RWPE1 (cell line): ENCODE measurements at regions of chr3 and their contacts with region 1.

Region 1: DNA sequence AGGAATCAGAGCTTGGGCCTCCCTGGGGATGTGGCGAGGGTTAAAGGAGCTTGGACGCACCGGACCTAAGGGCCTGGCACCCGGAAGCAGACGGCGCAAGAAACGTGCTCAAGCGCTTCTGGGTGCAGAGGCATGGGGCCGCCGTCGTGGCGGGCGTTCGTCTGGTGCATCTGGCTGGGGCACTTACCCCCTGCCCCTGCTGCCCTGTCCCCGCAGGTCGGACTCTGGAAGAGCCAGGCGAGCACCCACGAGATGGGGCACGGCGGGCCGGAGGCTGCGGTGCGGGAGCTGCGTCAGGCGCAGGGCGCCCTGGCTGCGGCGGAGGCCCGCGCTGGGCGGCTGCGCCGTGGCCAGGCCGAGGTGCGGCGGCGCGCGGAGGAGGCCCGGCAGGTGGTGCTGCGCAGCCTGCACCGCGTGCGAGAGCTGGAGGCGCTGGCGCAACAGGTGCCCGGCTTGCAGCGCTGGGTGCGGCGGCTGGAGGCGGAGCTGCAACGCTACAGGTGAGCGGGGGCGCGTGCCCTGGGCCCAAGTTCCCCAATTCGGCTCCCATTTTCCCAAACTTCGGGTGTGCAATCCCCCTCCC is 2.6 kb downstream of the EFCC1 start:
- DNase-seq: peak; percentile 53
- H3K27ac ChIP-seq: no peak overlapping the region
- CTCF ChIP-seq: 0 out of 2 replicates have a peak, but pooled peaks have one; percentile 19

Region 2: DNA sequence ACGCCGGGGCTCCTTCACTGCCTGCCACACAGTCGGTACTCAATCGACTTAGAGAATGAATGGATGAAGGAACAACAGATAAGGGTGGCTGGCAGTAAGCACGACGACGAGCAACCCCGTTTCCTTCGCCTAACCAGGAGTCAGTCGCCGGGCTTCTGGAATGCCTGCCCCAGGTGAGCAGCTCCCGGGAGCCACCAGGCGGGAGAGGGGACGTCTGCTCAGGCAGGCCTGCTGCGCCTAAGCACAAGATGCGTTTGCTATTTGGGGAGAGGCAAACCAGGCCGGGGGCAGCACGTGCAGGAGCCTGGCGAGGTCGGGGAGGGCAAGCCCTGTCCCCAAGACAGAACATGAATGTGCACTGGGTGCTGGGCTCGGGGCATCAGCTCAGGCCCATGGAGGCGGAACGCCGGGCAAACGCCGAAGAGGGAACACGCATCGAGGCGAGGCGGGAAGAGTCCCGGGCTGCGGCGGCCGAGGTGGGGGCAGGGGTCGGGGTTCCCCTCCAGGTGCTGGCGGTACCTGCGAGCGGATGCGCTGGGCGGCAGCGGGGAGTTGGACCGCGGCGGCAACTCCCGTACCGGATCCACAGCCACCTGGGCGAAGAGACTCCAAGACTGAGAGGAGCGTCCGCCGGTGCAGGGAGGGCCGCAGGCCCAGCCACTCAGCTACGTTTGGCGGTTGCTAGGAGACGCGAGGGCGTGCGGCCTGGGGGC is 10.1 kb before region 1 on chr3 and contains the start of gene CFAP92:
- CTCF ChIA-PET with region 1: interaction called, 15 read pairs
- POLR2A ChIA-PET with region 1: no interaction called
- DNase-seq: peak; percentile 90
- H3K27ac ChIP-seq: no peak within 1 kb of the TSS
- CTCF ChIP-seq: no peak